Naive thymus-derived CD4-positive, alpha-beta T cell (primary cell): ENCODE measurements at regions of chr10 and their contacts with region 1.

Region 1: DNA sequence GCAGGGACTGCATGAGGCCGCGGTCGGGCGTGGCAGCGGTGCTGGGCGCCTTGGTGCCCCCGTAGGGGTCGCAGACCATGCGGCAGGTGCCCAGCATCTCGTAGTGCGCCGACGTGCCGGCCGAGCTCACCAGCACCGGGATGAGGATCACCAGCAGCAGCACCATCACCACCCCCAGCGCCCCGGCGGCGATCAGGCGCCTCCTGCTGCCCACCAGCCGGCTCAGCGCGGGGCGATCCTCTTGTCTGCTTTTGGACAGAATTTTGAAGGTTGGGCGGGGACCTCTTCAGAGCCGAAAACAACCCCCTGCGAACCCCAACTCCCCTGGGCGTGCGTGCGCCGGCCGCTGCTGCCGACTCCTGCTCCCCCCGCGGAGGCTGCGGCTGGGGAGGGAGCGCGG is 779 bp downstream of the C1QL3 start:
- DNase-seq: peak in 2 of 9 donors; percentile 12 to 46
- ATAC-seq: peak; percentile 38
- H3K4me3 ChIP-seq: peak overlapping the region; percentile 20
- H3K4me3 Mint-ChIP-seq: peak overlapping the region in 7 of 10 donors; percentile 38 to 94 (median 62)
- H3K27ac ChIP-seq: no peak overlapping the region
- H3K27ac Mint-ChIP-seq: no peak overlapping the region
- H3K4me1 ChIP-seq: peaks cover 0 to 5% of the 10 kb centered on the region in 2 donors
- H3K4me1 Mint-ChIP-seq: peaks cover 0 to 21% (median 13%) of the 10 kb centered on the region in 7 donors
- H3K27me3 ChIP-seq: peaks cover 3 to 11% of the 10 kb centered on the region in 2 donors
- H3K27me3 Mint-ChIP-seq: peaks cover 39 to 56% (median 50%) of the 10 kb centered on the region in 5 donors

Region 2: DNA sequence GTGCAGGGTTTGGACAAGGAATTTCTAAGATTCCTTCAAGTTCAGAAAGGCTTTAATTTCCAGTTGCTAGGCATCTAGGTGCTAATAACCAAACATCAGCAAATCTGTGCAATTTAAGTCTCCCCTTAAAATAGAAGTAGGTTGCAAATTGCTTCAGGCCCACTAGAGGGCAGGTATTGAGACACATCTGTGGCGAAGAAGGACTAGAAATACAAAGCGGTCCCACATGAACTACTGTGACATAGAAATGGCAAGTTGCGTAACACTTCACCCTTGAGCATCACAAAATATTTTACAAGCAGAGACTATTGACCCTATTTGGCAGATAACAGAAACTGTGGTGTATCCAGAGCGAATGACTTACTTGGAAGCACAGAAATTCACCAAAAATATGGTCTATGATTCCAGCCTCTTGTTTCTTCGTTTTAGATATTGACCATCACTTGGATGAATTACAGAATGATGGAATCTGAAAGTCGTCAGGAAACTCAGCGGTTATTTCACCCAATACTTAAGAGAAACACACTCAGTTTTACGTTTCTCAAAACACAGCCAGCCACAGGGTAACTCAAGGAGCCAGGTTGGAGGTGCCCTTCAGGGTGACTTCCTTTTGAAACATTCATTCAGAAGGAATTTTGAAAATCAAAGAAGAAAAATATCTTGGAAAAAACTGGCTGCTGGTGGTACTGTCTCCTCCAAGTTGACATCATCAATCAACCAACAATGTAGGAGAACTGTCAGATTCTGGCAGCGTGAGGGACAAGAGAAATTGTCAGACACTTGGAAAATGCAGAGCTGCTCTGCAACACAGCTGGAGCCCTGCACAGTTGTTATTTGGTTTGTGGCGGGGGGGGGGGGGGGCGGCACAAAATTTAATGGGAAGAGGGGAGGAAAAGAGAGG is 404.2 kb before region 1 on chr10:
- CTCF ChIA-PET with region 1: no interaction called
- POLR2A ChIA-PET with region 1: no interaction called
- intact Hi-C with region 1: loop called in 1 of 2 experiments (anchors 10 kb)
- DNase-seq: no peak
- ATAC-seq: no peak
- H3K4me3 ChIP-seq: no peak overlapping the region
- H3K4me3 Mint-ChIP-seq: no peak overlapping the region
- H3K27ac ChIP-seq: no peak overlapping the region
- H3K27ac Mint-ChIP-seq: no peak overlapping the region
- H3K4me1 ChIP-seq: no peaks in the 10 kb centered on the region
- H3K4me1 Mint-ChIP-seq: no peaks in the 10 kb centered on the region
- H3K27me3 ChIP-seq: no peaks in the 10 kb centered on the region
- H3K27me3 Mint-ChIP-seq: peaks cover 0 to 4% (median 0%) of the 10 kb centered on the region in 5 donors

Region 3: DNA sequence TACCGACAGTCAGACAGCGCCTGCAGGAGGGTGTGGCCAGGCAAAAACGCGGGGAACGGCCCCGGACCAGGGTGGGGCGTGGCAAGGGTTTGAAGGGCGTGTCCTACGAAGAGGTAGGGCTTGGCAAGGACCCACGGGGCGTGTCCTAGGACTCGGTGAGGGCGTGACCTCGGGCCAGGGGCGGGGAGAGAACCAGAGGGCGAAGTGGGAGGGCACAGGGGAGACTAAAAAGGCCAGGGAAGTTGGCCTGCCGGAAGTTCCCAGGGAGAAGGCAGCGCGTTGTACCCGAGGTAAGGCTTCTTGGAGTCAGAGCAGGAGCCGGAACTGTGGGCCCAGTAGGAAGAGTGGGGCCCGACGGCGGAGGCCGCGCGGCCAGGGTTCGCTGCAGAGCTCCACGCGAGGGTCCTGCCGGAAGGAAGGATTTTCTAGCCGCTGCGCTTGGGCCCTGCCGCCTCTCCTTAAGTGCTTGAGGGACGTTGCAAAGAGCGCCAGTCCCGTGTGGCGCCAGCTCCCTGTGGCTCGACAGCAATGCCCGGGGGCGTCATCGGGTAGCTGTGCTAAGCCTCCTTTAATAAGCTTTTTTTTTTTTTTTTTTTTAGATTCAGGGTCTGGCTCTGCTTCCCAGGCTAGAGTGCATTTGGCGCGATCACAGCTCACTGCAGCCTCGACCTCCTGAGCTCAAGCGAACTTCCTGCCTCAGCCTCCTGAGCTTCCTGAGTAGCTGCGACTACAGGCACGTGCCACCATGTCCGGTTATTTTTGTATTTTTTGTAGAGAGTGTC is 84.0 kb before region 1 on chr10 and contains the start of gene PTER:
- CTCF ChIA-PET with region 1: no interaction called
- POLR2A ChIA-PET with region 1: no interaction called
- intact Hi-C with region 1: loop called in 1 of 2 experiments (anchors 2 kb)
- DNase-seq: peak; percentile 92 to 99 (median 94)
- ATAC-seq: peak; percentile 100
- H3K4me3 ChIP-seq: peak within 1 kb of the TSS; percentile 93
- H3K4me3 Mint-ChIP-seq: peak within 1 kb of the TSS; percentile 91 to 99 (median 96)
- H3K27ac ChIP-seq: peak within 1 kb of the TSS; percentile 77
- H3K27ac Mint-ChIP-seq: peak within 1 kb of the TSS; percentile 87 to 97 (median 94)
- H3K4me1 ChIP-seq: peaks cover 13 to 28% of the 10 kb centered on the region in 2 donors
- H3K4me1 Mint-ChIP-seq: peaks cover 36 to 57% (median 48%) of the 10 kb centered on the region in 7 donors
- H3K27me3 ChIP-seq: no peaks in the 10 kb centered on the region
- H3K27me3 Mint-ChIP-seq: peaks cover 0 to 19% (median 0%) of the 10 kb centered on the region in 5 donors
- total RNA-seq, gene PTER: 12.9 to 23.7 (median 15.3) TPM

Region 4: GRCh38 chr10:16545116-16545736 is 24.3 kb after region 1 on chr10:
- CTCF ChIA-PET with region 1: no interaction called
- POLR2A ChIA-PET with region 1: no interaction called
- intact Hi-C with region 1: no loop called
- DNase-seq: peak in 2 of 9 donors; percentile 19 to 22
- ATAC-seq: no peak
- H3K4me3 ChIP-seq: no peak overlapping the region
- H3K4me3 Mint-ChIP-seq: no peak overlapping the region
- H3K27ac ChIP-seq: no peak overlapping the region
- H3K27ac Mint-ChIP-seq: no peak overlapping the region
- H3K4me1 ChIP-seq: no peaks in the 10 kb centered on the region
- H3K4me1 Mint-ChIP-seq: peaks cover 0 to 6% (median 0%) of the 10 kb centered on the region in 7 donors
- H3K27me3 ChIP-seq: no peaks in the 10 kb centered on the region
- H3K27me3 Mint-ChIP-seq: peaks cover 15 to 48% (median 37%) of the 10 kb centered on the region in 5 donors

Region 5: DNA sequence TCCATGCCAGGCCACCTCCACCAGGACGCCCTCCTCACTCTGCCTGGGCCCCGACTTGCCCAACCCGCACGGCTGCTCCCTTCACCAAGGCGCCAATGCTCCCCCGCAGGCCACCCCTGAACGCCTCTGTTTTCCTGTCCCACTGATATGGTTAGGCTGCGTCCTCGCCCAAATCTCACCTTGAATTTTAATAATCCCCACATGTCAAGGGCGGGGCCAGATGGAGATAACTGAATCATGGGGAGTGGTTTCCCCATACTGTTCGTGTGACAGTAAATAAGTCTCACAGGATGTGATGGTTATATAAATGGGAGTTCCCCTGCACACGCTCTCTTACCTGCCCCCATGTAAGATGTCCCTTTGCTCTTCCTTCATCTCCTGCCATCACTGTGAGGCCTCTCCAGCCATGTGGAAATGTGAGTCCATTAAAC is 266.5 kb after region 1 on chr10:
- CTCF ChIA-PET with region 1: no interaction called
- POLR2A ChIA-PET with region 1: no interaction called
- intact Hi-C with region 1: loop called in 1 of 2 experiments (anchors 10 kb)
- DNase-seq: peak; percentile 13 to 75 (median 52)
- ATAC-seq: peak; percentile 97
- H3K4me3 ChIP-seq: no peak overlapping the region
- H3K4me3 Mint-ChIP-seq: peak overlapping the region in 8 of 10 donors; percentile 4 to 56 (median 34)
- H3K27ac ChIP-seq: peak overlapping the region; percentile 65
- H3K27ac Mint-ChIP-seq: peak overlapping the region; percentile 90 to 98 (median 93)
- H3K4me1 ChIP-seq: peaks cover 23 to 24% of the 10 kb centered on the region in 2 donors
- H3K4me1 Mint-ChIP-seq: peaks cover 26 to 42% (median 38%) of the 10 kb centered on the region in 7 donors
- H3K27me3 ChIP-seq: no peaks in the 10 kb centered on the region
- H3K27me3 Mint-ChIP-seq: no peaks in the 10 kb centered on the region